BJ (cell line): ENCODE measurements at regions of chr1 and their contacts with region 1.

Region 1: DNA sequence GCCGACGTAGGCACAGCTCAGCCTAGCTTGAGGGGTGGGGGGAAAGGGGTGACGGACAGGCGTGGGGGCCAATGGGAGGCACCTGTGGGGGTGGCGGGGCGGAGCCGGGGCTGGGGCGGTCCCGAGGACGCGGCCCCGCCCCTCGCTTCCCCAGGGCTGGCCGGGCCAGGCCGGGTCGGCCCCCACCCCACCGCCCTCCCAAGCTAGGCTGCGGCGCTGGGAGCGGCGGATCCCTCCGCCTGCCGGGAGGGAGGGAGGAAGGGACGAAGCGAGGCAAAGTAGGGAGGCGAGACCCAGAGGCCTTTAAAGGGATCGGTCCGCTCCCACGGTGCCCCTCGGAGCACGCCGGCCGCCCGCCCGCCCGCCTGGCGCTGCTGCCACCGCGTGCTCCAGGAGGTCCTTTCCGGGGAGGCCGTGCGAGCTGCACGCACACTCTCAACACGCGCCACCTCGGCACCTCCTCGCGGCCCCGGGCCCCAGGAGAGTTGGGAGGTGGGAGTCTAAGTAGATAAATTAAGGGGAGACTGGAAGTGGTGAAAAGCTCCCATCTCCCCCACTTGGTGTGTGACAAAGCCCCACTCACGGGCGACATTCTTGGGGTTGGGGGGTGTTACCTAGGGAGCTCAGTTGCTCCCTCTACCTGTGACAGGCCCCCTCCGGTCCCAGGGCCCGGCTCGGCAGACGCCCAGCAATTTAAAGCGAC is 373 bp upstream of the MEF2D start:
- DNase-seq: no peak
- H3K4me3 ChIP-seq: peak overlapping the region; percentile 99
- H3K27me3 ChIP-seq: no peaks in the 10 kb centered on the region
- CTCF ChIP-seq: peak; percentile 63

Region 2: GRCh38 chr1:156456622-156457465 is 44.1 kb before region 1 on chr1:
- CTCF ChIA-PET with region 1: interaction called, 11 read pairs
- POLR2A ChIA-PET with region 1: interaction called, 4 read pairs
- DNase-seq: peak; percentile 89
- H3K4me3 ChIP-seq: peak overlapping the region; percentile 47
- H3K27me3 ChIP-seq: peaks cover under 1% of the 10 kb centered on the region; the same call in 1 of the 2 replicates
- CTCF ChIP-seq: no peak

Region 3: GRCh38 chr1:156480411-156481192 is 20.3 kb before region 1 on chr1:
- CTCF ChIA-PET with region 1: interaction called, 14 read pairs
- POLR2A ChIA-PET with region 1: interaction called, 4 read pairs
- DNase-seq: no peak
- H3K4me3 ChIP-seq: no peak overlapping the region
- H3K27me3 ChIP-seq: no peaks in the 10 kb centered on the region
- CTCF ChIP-seq: peak; percentile 81

Region 4: DNA sequence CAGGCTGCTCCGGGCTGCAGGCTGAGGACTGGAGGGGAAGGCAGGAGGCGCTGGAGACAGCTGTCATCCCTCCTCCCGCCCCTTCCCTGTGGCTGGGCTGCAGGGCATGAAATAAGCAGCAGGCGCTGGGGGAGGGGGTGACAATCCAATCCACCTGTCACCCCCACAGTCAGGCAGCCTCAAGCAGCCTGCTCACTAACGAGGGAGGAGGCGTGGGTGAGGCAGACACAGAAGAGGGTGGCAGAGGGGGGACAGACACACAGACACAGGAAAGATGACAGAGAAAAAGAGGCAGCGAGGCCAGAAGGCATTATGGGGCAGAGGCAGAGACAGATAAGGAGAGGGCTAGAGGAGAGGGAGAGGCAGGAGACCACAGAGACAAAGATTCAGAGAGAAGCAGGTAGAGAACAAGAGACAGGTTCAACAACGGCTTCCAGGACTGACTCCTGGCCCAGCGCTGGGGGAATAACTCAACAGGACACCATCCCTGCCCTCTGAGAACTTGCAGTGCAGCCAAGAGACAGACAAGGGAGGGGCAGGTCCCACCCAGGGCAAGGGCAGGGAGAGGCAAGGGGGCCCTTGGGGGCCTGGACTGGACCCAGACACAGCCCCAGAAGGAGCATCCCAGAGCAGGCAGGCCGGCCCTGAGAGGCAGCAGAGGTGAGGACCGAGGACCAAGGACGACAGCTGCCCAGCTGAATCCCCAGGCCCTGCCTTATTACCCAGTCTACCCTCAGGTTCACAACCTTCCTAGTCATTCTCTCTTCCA is 11.6 kb before region 1 on chr1:
- CTCF ChIA-PET with region 1: interaction called, 29 read pairs
- POLR2A ChIA-PET with region 1: interaction called, 10 read pairs
- DNase-seq: no peak
- H3K4me3 ChIP-seq: no peak overlapping the region
- H3K27me3 ChIP-seq: no peaks in the 10 kb centered on the region
- CTCF ChIP-seq: peak; percentile 38; the same call in 1 of the 2 replicates

Region 5: DNA sequence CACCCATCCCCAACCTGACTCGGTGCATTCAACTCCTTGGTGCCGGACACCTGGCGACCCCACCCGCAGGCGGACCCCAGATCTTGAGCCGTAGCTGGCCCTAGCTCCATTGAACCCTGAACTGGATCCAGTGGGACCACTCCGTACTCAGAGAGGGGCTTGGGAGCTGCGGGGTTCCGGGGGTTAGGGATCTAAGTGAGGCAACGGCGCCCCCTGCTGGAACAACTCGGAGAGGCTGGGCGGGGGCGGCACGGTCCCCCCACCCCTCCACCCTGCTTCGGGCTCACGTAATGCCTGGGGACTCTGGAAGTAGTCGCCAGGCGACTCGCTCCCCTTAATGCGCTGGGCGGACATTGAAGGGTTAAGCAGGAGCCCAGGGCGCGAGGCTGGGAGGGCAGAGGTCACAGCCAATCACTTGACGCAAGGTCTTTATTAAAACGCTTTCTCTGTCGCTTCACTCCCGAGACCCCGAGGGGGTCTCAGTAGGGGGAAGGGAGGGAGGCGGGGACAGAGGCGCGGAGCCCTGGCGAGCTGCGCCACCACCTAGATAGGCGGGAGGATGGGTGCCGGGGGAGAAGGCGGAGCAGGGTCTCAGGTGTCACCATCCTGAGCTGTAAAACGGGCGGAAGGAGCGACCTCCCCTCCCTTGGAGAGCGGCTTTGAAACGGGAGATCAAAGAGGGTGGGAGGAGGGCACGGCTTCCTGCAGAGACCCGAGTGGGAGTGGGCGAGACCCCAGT is 205.1 kb after region 1 on chr1:
- CTCF ChIA-PET with region 1: no interaction called
- POLR2A ChIA-PET with region 1: interaction called, 10 read pairs
- DNase-seq: no peak
- H3K4me3 ChIP-seq: peak overlapping the region; percentile 58
- H3K27me3 ChIP-seq: no peaks in the 10 kb centered on the region
- CTCF ChIP-seq: peak; percentile 86